ENCODE measurements at regions of chr4 and their contacts with region 1.

Region 1: DNA sequence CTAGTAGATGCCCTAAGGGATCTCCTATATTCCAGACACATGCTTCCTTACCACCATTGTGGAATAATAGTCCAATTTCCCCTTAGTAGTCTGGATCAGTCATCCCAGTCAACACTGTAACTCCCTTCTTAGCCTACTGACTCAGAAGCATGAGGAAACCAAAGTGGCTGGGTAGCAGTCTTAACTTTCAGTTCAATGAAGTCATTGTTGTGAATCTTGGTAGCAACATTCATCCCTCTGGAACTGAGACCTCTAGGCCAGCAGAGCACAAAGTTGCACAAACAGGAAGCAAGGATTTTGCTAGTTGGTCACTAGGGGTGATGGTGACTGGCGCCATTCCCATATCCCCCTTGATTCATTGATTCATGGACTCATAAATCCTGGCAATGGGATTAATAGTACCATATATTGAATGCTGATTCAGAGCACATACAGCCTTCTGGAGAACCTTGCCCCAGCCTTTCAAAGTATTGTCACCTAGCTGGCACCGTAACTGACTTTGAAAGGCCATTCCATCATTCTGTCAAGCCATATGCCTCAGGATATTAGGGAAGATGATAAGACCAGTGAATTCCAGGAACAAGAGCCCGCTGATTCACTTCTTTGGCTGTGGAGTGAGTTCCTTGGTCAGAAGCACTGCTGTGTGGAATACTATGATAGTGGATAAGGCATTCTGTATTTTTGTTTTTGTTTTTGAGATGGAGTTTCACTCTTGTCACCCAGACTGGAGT is 19.7 kb upstream of the GPAT3 start:
- DNase-seq: no peak
- ATAC-seq: no peak
- H3K4me3 ChIP-seq: no peak overlapping the region
- H3K4me3 Mint-ChIP-seq: no peak overlapping the region
- H3K27ac ChIP-seq: no peak overlapping the region
- H3K27ac Mint-ChIP-seq: no peak overlapping the region
- H3K4me1 ChIP-seq: no peaks in the 10 kb centered on the region
- H3K4me1 Mint-ChIP-seq: no peaks in the 10 kb centered on the region
- H3K27me3 ChIP-seq: no peaks in the 10 kb centered on the region
- H3K27me3 Mint-ChIP-seq: no peaks in the 10 kb centered on the region
- CTCF ChIP-seq: no peak

Region 2: DNA sequence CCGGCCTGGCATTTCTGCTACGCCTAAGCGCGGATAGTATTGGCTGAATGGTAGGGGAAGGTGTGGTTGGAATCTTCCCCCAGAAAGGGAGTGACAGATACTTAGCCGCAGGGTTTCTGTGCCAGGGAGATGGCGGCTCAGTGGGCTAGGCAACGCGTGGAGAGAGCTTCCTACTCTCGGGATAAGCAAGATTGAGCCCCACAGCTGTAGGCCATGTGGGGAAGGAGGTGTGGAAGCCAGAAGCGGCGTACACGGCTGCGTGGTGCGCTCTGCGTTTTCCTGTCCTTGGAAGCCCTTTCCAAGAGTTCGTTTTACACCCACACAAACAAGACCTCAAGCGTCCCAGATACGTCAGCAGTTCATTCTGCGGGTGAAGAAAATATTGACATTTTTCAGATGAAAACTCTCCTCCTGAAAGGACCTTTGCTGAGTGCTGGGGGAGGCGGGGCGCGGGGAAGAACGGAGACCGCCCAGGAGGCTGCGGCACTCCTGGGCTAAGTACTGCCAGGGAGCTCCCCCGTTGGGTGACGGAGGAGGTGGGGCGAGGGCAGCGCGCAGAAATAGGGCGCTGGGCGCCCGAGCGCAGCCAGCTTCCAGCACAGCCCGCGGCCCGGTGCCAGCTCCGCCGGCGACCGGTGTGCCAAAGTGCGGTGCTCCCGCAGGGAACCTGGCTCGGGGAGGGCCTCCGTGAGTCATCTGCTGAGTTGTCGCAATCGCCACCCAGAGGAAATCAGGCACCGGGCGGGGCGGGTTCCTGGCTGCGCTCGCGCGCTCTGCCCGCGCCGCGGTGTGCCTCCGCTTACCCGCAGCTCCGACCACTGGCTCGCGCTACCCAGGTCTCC is 19.5 kb after region 1 on chr4 and contains the start of gene GPAT3:
- CTCF ChIA-PET with region 1: no interaction called
- POLR2A ChIA-PET with region 1: no interaction called
- intact Hi-C with region 1: loop called in 1 of 2 experiments (anchors 2 kb)
- DNase-seq: peak; percentile 33 to 82 (median 58)
- ATAC-seq: peak; percentile 79
- H3K4me3 ChIP-seq: peak within 1 kb of the TSS; percentile 71
- H3K4me3 Mint-ChIP-seq: peak within 1 kb of the TSS; percentile 93
- H3K27ac ChIP-seq: peak within 1 kb of the TSS in 1 of 2 donors; percentile 1
- H3K27ac Mint-ChIP-seq: peak within 1 kb of the TSS; percentile 81
- H3K4me1 ChIP-seq: peaks cover 21% of the 10 kb centered on the region
- H3K4me1 Mint-ChIP-seq: peaks cover 39% of the 10 kb centered on the region
- H3K27me3 ChIP-seq: no peaks in the 10 kb centered on the region
- H3K27me3 Mint-ChIP-seq: peaks cover 34% of the 10 kb centered on the region
- CTCF ChIP-seq: no peak
- total RNA-seq, gene GPAT3: 2.9 to 4.6 TPM

Region 3: DNA sequence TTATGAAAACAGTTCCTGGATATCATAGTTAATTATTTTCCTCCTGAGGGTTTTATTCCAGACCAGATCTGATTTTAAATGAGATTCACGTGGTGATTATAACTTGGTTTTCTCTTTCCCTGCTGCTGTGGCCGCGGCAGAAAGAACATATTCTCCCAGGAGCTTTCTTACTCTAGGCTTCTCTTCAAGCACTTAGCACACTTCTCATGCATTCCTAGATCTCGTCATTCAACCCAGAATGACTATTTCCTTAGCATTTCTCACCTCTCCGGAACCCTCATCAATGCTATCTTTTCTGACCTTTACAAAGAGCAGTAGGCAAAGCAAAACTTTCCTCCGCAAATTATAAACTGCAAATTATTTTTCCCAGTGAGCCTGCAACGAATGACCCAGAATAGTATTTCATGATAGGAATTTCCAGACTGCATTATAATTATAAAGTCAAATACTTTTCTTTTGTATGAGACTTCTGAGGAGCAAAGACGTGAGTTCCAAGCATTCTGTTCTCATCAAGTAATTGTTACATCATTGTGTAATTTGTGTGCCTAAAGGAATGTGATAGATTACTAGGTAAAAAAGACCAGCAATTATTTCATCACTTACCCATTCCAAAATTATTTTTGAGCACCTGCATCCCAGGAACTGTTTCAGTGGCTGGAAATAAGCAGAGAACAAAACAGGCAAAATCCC is 142.7 kb after region 1 on chr4:
- CTCF ChIA-PET with region 1: no interaction called
- POLR2A ChIA-PET with region 1: no interaction called
- intact Hi-C with region 1: no loop called
- DNase-seq: no peak
- ATAC-seq: no peak
- H3K4me3 ChIP-seq: no peak overlapping the region
- H3K4me3 Mint-ChIP-seq: no peak overlapping the region
- H3K27ac ChIP-seq: no peak overlapping the region
- H3K27ac Mint-ChIP-seq: no peak overlapping the region
- H3K4me1 ChIP-seq: no peaks in the 10 kb centered on the region
- H3K4me1 Mint-ChIP-seq: peaks cover 24% of the 10 kb centered on the region
- H3K27me3 ChIP-seq: no peaks in the 10 kb centered on the region
- H3K27me3 Mint-ChIP-seq: peaks cover 5% of the 10 kb centered on the region
- CTCF ChIP-seq: no peak

Measured in CD4-positive, alpha-beta T cell (primary cell).